ENCODE measurements at regions of chr9 and their contacts with region 1.

Region 1: DNA sequence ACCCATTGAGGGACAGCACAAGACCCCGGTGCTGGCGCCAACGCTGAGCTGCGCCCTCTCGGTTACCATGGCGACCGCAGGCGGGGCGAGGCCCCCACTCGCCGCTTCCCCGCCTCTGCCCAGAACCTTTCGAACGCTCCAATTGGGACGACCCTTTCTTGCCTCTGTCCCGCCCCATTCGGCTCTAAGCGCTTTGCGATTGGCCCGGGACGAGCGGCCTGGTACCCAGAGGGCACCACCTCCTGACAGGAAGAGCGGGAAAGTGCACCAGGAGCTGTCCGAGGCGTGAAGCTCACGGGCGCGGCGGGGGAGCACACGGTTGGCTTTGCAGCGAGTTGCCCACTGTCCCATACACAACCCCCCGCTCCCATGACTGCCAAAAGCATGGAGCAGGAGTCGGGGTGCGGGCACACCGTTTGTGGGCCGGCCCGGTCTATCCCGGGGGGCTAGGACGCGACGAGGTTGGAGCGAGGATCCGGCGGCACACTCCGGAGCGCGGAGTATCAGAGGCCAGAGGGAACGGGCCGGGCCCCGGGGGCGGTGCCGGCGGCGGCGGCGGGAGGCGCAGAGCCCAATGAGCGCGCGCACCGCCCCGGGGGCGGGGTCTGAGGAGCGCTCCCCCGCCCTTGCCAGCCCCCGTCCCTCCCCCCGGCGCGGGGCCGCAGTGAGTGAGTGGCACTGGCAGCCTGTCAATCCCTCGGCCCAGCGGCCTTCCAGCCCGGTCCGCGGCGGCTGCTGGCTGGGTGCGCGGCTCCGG is 978 bp upstream of the PBX3 start:
- DNase-seq: peak; percentile 95
- ATAC-seq: peak; percentile 81
- H3K4me3 ChIP-seq: peak overlapping the region; percentile 47 to 95 (median 82)
- H3K4me3 Mint-ChIP-seq: peak overlapping the region; percentile 97
- H3K27ac ChIP-seq: peak overlapping the region; percentile 77 to 83
- H3K27ac Mint-ChIP-seq: peak overlapping the region; percentile 97
- H3K4me1 ChIP-seq: peaks cover 16% of the 10 kb centered on the region in 2 donors
- H3K4me1 Mint-ChIP-seq: peaks cover 36% of the 10 kb centered on the region
- H3K27me3 ChIP-seq: no peaks in the 10 kb centered on the region
- H3K27me3 Mint-ChIP-seq: no peaks in the 10 kb centered on the region
- CTCF ChIP-seq: no peak

Region 2: GRCh38 chr9:125241000-125241862 is 505.0 kb before region 1 on chr9 and contains the start of gene HSPA5:
- CTCF ChIA-PET with region 1: no interaction called
- POLR2A ChIA-PET with region 1: no interaction called
- intact Hi-C with region 1: loop called (anchors 2 kb)
- DNase-seq: peak; percentile 100
- ATAC-seq: peak; percentile 90
- H3K4me3 ChIP-seq: peak within 1 kb of the TSS; percentile 82 to 98 (median 92)
- H3K4me3 Mint-ChIP-seq: peak within 1 kb of the TSS; percentile 95
- H3K27ac ChIP-seq: peak within 1 kb of the TSS; percentile 98 to 99
- H3K27ac Mint-ChIP-seq: peak within 1 kb of the TSS; percentile 93
- H3K4me1 ChIP-seq: peaks cover 16 to 26% of the 10 kb centered on the region in 2 donors
- H3K4me1 Mint-ChIP-seq: peaks cover 50% of the 10 kb centered on the region
- H3K27me3 ChIP-seq: no peaks in the 10 kb centered on the region
- H3K27me3 Mint-ChIP-seq: no peaks in the 10 kb centered on the region
- CTCF ChIP-seq: no peak
- total RNA-seq, gene HSPA5: 40.1 and 42.6 TPM in 2 replicates

Region 3: DNA sequence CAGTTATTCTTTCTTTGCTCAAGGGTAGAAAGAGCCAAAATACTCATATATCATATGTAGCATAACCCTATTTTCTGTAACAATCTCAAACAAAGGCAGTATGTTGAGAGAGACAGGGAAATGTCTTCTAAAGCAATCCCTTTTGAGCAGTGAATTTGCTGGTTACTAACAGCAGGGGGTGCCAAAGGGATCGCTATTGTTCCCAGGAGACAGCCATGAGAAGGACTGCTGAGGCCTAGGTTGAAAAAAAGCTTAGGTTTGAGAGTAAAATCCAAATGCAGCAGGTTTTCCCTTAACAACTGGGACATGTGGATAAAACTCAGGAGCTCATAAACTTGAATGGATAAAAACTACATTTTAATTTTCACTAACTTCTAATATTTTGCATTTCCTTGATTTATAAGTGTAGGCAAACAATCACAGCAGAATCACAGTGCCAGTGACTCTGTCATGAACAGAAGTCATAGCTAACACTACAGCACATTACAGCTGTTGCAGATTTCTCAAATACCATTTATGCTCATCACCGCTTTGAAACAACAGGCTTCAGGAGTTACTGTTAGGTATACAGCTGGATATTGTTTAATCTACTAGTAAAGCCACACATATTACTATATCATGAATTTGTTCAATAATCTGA is 187.6 kb before region 1 on chr9:
- CTCF ChIA-PET with region 1: interaction called, 5 read pairs
- POLR2A ChIA-PET with region 1: no interaction called
- intact Hi-C with region 1: loop called (anchors 5 kb)
- DNase-seq: peak; percentile 80
- ATAC-seq: peak; percentile 81
- H3K4me3 ChIP-seq: no peak overlapping the region
- H3K4me3 Mint-ChIP-seq: no peak overlapping the region
- H3K27ac ChIP-seq: no peak overlapping the region
- H3K27ac Mint-ChIP-seq: peak overlapping the region; percentile 32
- H3K4me1 ChIP-seq: peaks cover 18 to 30% of the 10 kb centered on the region in 2 donors
- H3K4me1 Mint-ChIP-seq: peaks cover 22% of the 10 kb centered on the region
- H3K27me3 ChIP-seq: no peaks in the 10 kb centered on the region
- H3K27me3 Mint-ChIP-seq: no peaks in the 10 kb centered on the region
- CTCF ChIP-seq: peak; percentile 90

Region 4: GRCh38 chr9:125650271-125650737 is 95.9 kb before region 1 on chr9:
- CTCF ChIA-PET with region 1: interaction called, 5 read pairs
- POLR2A ChIA-PET with region 1: no interaction called
- intact Hi-C with region 1: loop called (anchors 1 kb)
- DNase-seq: peak; percentile 84
- ATAC-seq: peak; percentile 88
- H3K4me3 ChIP-seq: peak overlapping the region in 4 of 5 experiments; percentile 26 to 55 (median 28)
- H3K4me3 Mint-ChIP-seq: peak overlapping the region; percentile 73
- H3K27ac ChIP-seq: peak overlapping the region; percentile 81 to 95
- H3K27ac Mint-ChIP-seq: peak overlapping the region; percentile 88
- H3K4me1 ChIP-seq: peaks cover 70 to 78% of the 10 kb centered on the region in 2 donors
- H3K4me1 Mint-ChIP-seq: peaks cover 80% of the 10 kb centered on the region
- H3K27me3 ChIP-seq: no peaks in the 10 kb centered on the region
- H3K27me3 Mint-ChIP-seq: no peaks in the 10 kb centered on the region
- CTCF ChIP-seq: no peak

Region 5: DNA sequence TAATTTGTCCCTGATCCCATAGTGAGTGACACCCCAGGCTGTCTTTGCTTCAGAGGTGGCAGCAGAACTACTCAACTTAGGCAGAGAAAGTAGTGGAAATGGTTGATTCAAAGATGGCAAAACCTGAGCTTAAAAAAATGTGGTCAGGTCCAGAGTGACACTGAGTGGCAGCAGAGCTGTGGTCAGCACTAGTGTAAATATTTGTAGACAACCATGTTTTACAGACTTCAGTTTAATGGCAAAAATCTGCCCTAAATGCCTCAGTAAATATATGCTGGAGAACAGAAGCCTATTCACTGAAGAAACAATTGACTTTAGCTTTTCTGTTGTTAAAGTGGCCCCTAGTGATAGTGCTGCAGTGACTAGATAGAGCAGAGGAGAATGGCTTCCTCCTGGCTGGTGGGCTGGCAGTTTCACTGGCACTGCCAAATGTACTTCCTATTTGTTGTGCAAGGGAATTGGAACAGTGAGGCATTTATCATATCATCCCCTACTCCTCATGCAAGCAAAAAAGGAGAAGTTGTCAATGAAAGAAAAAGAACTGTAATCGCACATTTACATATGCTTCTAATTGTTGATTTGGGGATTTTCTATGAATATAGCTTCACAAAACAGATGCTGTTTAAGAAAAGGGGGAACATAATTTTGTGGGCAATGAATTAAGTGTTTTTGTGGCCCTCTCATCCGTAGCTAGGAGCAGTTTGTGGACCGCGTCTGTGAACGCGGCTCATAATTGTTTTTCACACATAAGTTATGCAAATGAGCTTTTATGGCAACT is 13.0 kb after region 1 on chr9:
- CTCF ChIA-PET with region 1: interaction called, 6 read pairs
- POLR2A ChIA-PET with region 1: interaction called, 5 read pairs
- intact Hi-C with region 1: loop called (anchors 1 kb)
- DNase-seq: peak; percentile 77
- ATAC-seq: peak; percentile 84
- H3K4me3 ChIP-seq: peak overlapping the region; percentile 26 to 66 (median 45)
- H3K4me3 Mint-ChIP-seq: peak overlapping the region; percentile 75
- H3K27ac ChIP-seq: peak overlapping the region; percentile 13 to 32
- H3K27ac Mint-ChIP-seq: peak overlapping the region; percentile 71
- H3K4me1 ChIP-seq: peaks cover 9 to 14% of the 10 kb centered on the region in 2 donors
- H3K4me1 Mint-ChIP-seq: peaks cover 29% of the 10 kb centered on the region
- H3K27me3 ChIP-seq: no peaks in the 10 kb centered on the region
- H3K27me3 Mint-ChIP-seq: no peaks in the 10 kb centered on the region
- CTCF ChIP-seq: no peak

Region 6: GRCh38 chr9:125889476-125890419 is 143.6 kb after region 1 on chr9:
- CTCF ChIA-PET with region 1: no interaction called
- POLR2A ChIA-PET with region 1: no interaction called
- intact Hi-C with region 1: loop called (anchors 5 kb)
- DNase-seq: peak; percentile 69
- ATAC-seq: peak; percentile 81
- H3K4me3 ChIP-seq: peak overlapping the region; percentile 40 to 73 (median 59)
- H3K4me3 Mint-ChIP-seq: peak overlapping the region; percentile 86
- H3K27ac ChIP-seq: no peak overlapping the region
- H3K27ac Mint-ChIP-seq: peak overlapping the region; percentile 4
- H3K4me1 ChIP-seq: peaks cover 10 to 11% of the 10 kb centered on the region in 2 donors
- H3K4me1 Mint-ChIP-seq: peaks cover 24% of the 10 kb centered on the region
- H3K27me3 ChIP-seq: peaks cover 0 to 13% (median 0%) of the 10 kb centered on the region in 4 experiments
- H3K27me3 Mint-ChIP-seq: no peaks in the 10 kb centered on the region
- CTCF ChIP-seq: no peak

Region 7: DNA sequence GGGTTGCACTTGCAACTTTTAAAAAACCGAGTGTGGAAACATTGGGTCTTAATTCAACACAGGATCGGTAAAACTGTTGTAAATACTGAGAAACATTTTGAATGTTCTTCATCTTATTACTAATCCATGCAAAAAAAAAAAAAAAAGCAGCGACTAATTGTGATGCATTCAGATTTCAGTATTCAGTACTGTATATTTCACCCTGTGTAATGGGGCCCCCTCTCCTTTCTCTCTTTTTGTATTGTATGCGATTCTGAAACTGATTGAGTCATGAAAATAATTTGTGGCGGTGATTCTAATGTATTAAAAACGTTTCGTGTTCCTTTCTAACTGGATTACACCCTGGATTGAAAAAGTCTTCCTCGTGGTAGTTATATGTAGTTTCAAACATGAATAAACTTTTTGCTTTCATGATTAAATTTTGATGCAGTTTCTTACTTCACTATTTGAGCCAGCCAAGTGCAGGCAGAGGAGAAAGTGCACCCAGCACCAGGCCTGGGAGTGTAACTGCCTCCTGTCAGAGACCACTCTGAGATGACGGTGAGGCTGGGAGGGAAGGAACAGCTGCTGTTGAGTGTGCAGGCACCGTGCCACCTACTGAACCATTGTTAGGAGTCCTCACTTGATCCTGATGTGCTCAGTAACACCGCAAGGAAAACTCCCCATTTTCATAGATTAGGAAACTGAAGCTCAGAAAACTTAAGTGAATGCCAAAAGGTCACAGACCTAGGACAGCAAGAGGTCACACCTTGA is 220.9 kb after region 1 on chr9:
- CTCF ChIA-PET with region 1: no interaction called
- POLR2A ChIA-PET with region 1: no interaction called
- intact Hi-C with region 1: no loop called
- DNase-seq: no peak
- ATAC-seq: no peak
- H3K4me3 ChIP-seq: no peak overlapping the region
- H3K4me3 Mint-ChIP-seq: no peak overlapping the region
- H3K27ac ChIP-seq: no peak overlapping the region
- H3K27ac Mint-ChIP-seq: no peak overlapping the region
- H3K4me1 ChIP-seq: peaks cover 7 to 16% of the 10 kb centered on the region in 2 donors
- H3K4me1 Mint-ChIP-seq: peaks cover 29% of the 10 kb centered on the region
- H3K27me3 ChIP-seq: no peaks in the 10 kb centered on the region
- H3K27me3 Mint-ChIP-seq: no peaks in the 10 kb centered on the region
- CTCF ChIP-seq: no peak

Region 8: DNA sequence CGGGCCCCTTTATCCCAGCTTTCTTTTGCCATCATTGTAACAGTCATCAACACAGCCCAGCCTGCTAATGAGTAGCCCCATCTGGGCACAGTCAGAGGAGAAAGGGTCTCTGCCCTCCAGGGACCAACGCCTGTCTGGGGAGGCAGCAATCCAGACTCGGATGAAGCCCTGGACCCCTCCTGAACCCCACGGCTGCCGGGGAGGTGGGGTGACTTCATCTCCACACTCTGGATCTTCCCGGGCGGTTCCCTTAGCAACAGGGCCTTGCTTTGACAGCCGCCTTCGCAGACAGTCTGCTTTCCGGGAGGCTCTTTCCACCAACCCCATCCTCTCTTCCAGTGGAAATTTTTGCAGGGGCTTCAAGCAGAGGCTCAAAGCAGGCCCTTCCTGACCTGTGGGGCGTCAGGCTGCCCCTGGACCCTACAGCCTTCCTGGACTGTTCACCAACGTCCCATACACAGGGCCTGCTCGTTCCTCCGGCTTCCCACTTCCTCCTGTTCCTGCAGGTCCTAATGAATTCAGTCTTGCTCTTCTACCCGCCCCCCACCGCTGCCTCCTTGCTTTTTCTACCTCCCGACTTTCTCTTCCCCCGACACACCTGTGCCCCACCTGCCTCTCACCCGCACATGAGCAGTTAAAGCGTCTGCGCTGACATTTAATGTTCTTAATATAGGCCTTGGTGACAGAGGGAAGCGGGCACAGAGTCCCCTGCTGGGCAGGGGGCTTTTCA is 418.8 kb after region 1 on chr9:
- CTCF ChIA-PET with region 1: no interaction called
- POLR2A ChIA-PET with region 1: no interaction called
- intact Hi-C with region 1: no loop called
- DNase-seq: no peak
- ATAC-seq: no peak
- H3K4me3 ChIP-seq: no peak overlapping the region
- H3K4me3 Mint-ChIP-seq: no peak overlapping the region
- H3K27ac ChIP-seq: no peak overlapping the region
- H3K27ac Mint-ChIP-seq: no peak overlapping the region
- H3K4me1 ChIP-seq: no peaks in the 10 kb centered on the region
- H3K4me1 Mint-ChIP-seq: peaks cover 2% of the 10 kb centered on the region
- H3K27me3 ChIP-seq: peaks cover 0 to 4% (median 0%) of the 10 kb centered on the region in 4 experiments
- H3K27me3 Mint-ChIP-seq: peaks cover 27% of the 10 kb centered on the region
- CTCF ChIP-seq: no peak